Thyroid gland (tissue), 4 donors: ENCODE measurements at regions of chr11 and their contacts with region 1.

Region 1: GRCh38 chr11:74929431-74930363 is 19.2 kb downstream of the XRRA1 start:
- DNase-seq: peak; percentile 63 to 74
- H3K4me3 ChIP-seq: no peak overlapping the region
- H3K27ac ChIP-seq: no peak overlapping the region
- H3K4me1 ChIP-seq: no peaks in the 10 kb centered on the region
- H3K27me3 ChIP-seq: no peaks in the 10 kb centered on the region
- CTCF ChIP-seq: peak; percentile 52 to 87 (median 80)
- POLR2A ChIP-seq: no peak

Region 2: GRCh38 chr11:75031771-75032549 is 102.3 kb after region 1 on chr11:
- intact Hi-C with region 1: loop called (anchors 2 kb)
- DNase-seq: peak; percentile 64 to 75
- H3K4me3 ChIP-seq: no peak overlapping the region
- H3K27ac ChIP-seq: no peak overlapping the region
- H3K4me1 ChIP-seq: no peaks in the 10 kb centered on the region
- H3K27me3 ChIP-seq: no peaks in the 10 kb centered on the region
- CTCF ChIP-seq: peak; percentile 20 to 61 (median 40)
- POLR2A ChIP-seq: no peak

Region 3: GRCh38 chr11:75248690-75249268 is 319.1 kb after region 1 on chr11:
- intact Hi-C with region 1: loop called (anchors 5 kb)
- DNase-seq: peak; percentile 82 to 87
- H3K4me3 ChIP-seq: no peak overlapping the region
- H3K27ac ChIP-seq: no peak overlapping the region
- H3K4me1 ChIP-seq: no peaks in the 10 kb centered on the region
- H3K27me3 ChIP-seq: no peaks in the 10 kb centered on the region
- CTCF ChIP-seq: peak; percentile 59 to 99 (median 98)
- POLR2A ChIP-seq: no peak